SK-N-SH (cell line): ENCODE measurements at regions of chr1 and their contacts with region 1.

Region 1: DNA sequence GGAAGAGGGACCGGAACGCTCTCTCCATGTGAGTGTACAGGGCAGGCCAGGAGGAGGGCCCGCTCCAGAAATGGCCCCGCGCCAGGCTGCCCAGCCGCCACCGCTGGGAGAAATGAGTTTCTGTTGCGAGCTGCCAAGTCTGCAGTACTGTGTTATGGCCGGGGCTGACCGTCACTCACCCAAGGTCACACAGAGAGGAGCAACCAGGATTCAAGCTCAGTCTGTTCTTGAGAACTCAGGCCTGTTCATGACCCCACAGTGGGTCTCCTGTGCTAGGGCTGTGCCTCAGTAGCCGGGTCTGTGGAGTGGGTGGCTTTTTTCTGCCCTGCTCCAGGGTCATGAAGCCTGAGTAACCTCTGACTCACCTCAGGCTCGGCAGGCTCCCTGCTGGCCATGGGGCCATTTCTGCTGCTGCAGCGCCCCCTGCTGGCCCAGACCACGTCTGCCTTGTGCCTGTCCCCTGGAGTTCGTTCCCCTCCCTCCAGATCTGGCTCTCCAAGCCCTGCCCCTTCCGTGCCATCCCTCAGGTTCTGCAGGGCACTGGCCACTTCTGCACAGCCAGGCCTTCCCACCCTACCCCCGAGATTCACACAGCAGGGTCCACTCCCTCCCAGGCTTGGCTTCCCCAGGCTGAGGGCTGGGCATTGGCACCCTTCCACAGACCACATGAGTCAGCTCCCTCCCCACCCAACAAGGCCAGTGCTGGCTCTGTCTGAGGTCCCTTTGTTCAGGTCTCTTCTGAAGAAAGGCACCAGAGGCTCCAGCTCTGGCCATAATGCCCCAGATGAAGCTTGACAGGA is 51.8 kb downstream of the EDN2 start:
- DNase-seq: peak; percentile 90
- H3K4me3 ChIP-seq: peak overlapping the region; percentile 25 to 58; a peak in 3 of 4 replicates
- H3K27ac ChIP-seq: peak overlapping the region; percentile 85 to 88
- H3K4me1 ChIP-seq: peaks cover 36 to 65% of the 10 kb centered on the region in 2 experiments
- H3K27me3 ChIP-seq: no peaks in the 10 kb centered on the region
- CTCF ChIP-seq: peak; percentile 98
- EP300 ChIP-seq: peak in 1 of 2 experiments; percentile 75; a peak in 1 of 4 replicates
- RAD21 ChIP-seq: peak; percentile 89

Region 2: GRCh38 chr1:41313661-41314131 is 119.0 kb before region 1 on chr1:
- CTCF ChIA-PET with region 1: interaction called, 12 read pairs
- POLR2A ChIA-PET with region 1: no interaction called
- DNase-seq: peak; percentile 47
- H3K4me3 ChIP-seq: no peak overlapping the region
- H3K27ac ChIP-seq: no peak overlapping the region
- H3K4me1 ChIP-seq: no peaks in the 10 kb centered on the region
- H3K27me3 ChIP-seq: no peaks in the 10 kb centered on the region
- CTCF ChIP-seq: peak; percentile 58
- EP300 ChIP-seq: no peak
- RAD21 ChIP-seq: peak; percentile 35; the same call in 1 of the 2 replicates

Region 3: DNA sequence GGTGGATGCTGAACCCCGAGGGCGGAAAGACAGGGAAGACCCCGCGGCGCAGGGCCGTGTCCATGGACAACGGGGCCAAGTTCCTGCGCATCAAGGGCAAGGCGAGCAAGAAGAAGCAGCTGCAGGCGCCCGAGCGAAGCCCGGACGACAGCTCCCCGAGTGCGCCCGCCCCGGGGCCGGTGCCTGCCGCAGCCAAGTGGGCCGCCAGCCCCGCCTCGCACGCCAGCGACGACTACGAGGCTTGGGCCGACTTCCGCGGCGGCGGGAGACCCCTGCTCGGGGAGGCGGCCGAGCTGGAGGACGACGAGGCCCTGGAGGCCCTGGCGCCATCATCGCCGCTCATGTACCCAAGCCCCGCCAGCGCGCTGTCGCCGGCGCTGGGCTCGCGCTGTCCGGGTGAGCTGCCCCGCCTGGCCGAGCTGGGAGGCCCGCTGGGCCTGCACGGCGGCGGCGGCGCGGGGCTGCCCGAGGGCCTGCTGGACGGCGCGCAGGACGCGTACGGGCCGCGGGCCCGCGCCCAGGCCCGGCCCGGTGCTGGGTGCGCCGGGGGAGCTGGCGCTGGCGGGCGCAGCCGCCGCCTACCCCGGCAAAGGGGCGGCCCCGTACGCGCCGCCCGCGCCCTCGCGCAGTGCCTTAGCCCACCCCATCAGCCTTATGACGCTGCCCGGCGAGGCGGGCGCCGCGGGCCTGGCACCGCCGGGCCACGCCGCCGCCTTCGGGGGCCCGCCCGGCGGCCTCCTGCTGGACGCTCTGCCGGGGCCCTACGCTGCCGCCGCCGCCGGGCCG is 50.8 kb before region 1 on chr1:
- CTCF ChIA-PET with region 1: interaction called, 10 read pairs
- POLR2A ChIA-PET with region 1: no interaction called
- DNase-seq: peak; percentile 88
- H3K4me3 ChIP-seq: peak overlapping the region in 1 of 2 experiments; percentile 43; a peak in 3 of 4 replicates
- H3K27ac ChIP-seq: peak overlapping the region; percentile 39 to 65; a peak in 2 of 4 replicates
- H3K4me1 ChIP-seq: peaks cover 7 to 42% of the 10 kb centered on the region in 2 experiments; a peak in 1 of 4 replicates
- H3K27me3 ChIP-seq: no peaks in the 10 kb centered on the region
- CTCF ChIP-seq: no peak
- EP300 ChIP-seq: no peak
- RAD21 ChIP-seq: no peak

Region 4: DNA sequence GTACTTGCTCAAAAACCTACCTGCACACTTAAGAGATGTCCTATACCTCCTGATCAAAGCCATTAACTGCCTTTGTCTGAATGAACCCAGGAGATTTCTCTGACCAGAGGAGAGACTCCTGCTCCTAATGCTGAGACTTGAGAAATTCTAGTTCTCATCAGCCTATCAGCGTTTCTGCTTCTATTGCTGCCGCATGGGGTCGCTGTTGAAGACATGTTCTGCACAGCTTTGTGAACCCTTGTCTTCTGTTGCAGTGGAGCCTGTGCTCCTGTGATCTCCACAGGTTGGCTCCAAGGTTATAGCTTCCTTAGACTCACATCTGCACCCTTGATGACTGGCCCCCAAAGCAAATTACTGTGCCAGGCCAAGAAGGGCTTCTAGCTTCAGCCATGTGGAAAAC is 11.6 kb after region 1 on chr1:
- CTCF ChIA-PET with region 1: interaction called, 64 read pairs
- POLR2A ChIA-PET with region 1: no interaction called
- DNase-seq: no peak
- H3K4me3 ChIP-seq: no peak overlapping the region
- H3K27ac ChIP-seq: no peak overlapping the region
- H3K4me1 ChIP-seq: peaks cover 21 to 39% of the 10 kb centered on the region in 2 experiments
- H3K27me3 ChIP-seq: no peaks in the 10 kb centered on the region
- CTCF ChIP-seq: peak; percentile 41
- EP300 ChIP-seq: no peak
- RAD21 ChIP-seq: no peak

Region 5: GRCh38 chr1:41496080-41497055 is 63.7 kb after region 1 on chr1:
- CTCF ChIA-PET with region 1: interaction called, 16 read pairs
- POLR2A ChIA-PET with region 1: no interaction called
- DNase-seq: no peak
- H3K4me3 ChIP-seq: no peak overlapping the region
- H3K27ac ChIP-seq: no peak overlapping the region
- H3K4me1 ChIP-seq: peaks cover 25 to 43% of the 10 kb centered on the region in 2 experiments; a peak in 3 of 4 replicates
- H3K27me3 ChIP-seq: no peaks in the 10 kb centered on the region
- CTCF ChIP-seq: no peak
- EP300 ChIP-seq: no peak
- RAD21 ChIP-seq: no peak

Region 6: GRCh38 chr1:41564738-41565475 is 132.2 kb after region 1 on chr1:
- CTCF ChIA-PET with region 1: no interaction called
- POLR2A ChIA-PET with region 1: no interaction called
- DNase-seq: no peak
- H3K4me3 ChIP-seq: no peak overlapping the region
- H3K27ac ChIP-seq: no peak overlapping the region
- H3K4me1 ChIP-seq: no peaks in the 10 kb centered on the region
- H3K27me3 ChIP-seq: no peaks in the 10 kb centered on the region
- CTCF ChIP-seq: no peak
- EP300 ChIP-seq: no peak
- RAD21 ChIP-seq: no peak

Region 7: GRCh38 chr1:41650028-41650880 is 217.6 kb after region 1 on chr1:
- CTCF ChIA-PET with region 1: no interaction called
- POLR2A ChIA-PET with region 1: no interaction called
- DNase-seq: no peak
- H3K4me3 ChIP-seq: no peak overlapping the region
- H3K27ac ChIP-seq: no peak overlapping the region
- H3K4me1 ChIP-seq: peaks cover 4 to 11% of the 10 kb centered on the region in 2 experiments; a peak in 2 of 4 replicates
- H3K27me3 ChIP-seq: no peaks in the 10 kb centered on the region
- CTCF ChIP-seq: no peak
- EP300 ChIP-seq: no peak
- RAD21 ChIP-seq: no peak